ENCODE measurements at regions of chr17 and their contacts with region 1.

Region 1: DNA sequence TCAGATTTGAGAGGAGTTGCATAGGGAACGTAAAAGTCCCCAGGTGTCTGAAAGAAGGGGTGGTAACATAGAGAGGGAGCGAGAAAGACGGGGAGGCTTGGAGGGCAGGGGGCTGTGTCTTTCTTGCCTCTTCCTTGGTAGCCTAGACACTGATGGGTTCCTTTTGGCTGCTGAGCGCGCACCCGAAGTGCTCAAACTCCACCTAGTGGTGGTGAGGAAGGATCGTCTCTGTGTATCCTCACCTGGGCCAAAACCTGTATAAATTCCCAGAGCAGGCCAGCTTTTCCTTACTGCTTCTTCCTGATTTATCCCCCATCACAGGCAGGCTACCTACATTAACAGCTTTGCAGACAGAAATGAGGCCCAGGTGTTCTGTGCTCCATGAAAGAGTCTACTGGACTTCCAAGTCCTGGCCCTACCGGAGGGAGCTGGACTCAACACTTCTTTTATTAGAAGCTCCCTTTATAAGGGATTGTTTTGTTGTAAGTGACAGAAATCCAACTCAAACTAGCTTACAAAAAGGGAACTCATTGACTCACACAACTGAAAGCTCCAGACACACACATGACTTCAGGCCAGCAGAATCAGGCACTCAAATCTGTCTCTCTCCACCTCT is 5.5 kb upstream of the SLC25A35 start:
- DNase-seq: peak; percentile 83

Region 2: GRCh38 chr17:8118769-8119580 is 181.8 kb before region 1 on chr17:
- intact Hi-C with region 1: loop called (anchors 5 kb)
- DNase-seq: peak; percentile 93

Measured in cardiac septum (tissue), 1 donor.